ENCODE measurements at regions of chr1 and their contacts with region 1.

Region 1: DNA sequence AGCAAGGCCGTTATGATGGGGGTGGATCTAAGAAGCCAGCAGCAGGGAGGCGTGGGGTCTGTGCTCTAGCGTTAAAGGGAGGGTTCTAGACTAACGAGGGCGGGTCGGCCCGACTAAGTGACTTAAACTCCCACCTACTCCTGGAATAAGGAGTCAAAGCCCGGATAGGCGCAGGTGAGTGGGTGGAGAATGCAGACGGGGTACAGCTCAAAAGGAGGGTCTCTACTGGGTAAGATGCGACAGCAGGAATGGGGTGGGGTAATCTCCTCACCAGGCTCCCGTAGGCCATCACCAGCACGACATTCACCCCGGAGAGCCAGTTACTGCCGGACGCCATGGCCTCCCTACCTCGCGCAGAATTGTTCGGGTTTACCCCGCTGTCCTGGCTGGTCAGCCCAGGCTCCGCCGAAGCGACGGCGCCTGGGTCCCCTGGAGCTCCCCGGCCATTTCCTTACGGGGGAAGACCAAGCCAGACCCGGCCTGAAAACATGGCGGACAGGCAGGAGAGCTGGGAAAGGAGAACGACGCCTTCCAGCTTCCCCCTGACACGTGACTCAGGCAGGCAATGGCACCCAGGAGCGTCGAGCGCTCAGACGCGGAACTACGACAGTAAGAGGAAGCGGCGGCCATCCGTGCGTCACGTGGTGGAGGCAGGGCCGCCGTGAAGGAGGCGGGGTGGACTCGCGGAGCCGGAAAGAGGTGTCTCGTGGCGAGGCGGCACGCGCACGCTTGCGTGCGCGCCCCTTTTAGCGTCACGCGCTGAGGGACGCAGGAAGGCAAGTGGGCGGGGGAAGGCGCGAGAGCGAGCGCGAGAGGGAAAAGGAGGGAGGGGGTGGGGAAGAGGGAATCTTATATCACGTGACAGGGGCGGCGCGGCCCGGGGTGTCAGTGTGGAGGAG is at the start of gene UBAP2L:
- DNase-seq: peak; percentile 100
- H3K4me3 Mint-ChIP-seq: peak within 1 kb of the TSS; percentile 92
- H3K27ac Mint-ChIP-seq: peak within 1 kb of the TSS; percentile 99
- H3K4me1 Mint-ChIP-seq: peaks cover 49% of the 10 kb centered on the region
- H3K27me3 Mint-ChIP-seq: no peaks in the 10 kb centered on the region
- CTCF ChIP-seq: no peak
- total RNA-seq, gene UBAP2L: 219 and 223 TPM in 2 replicates

Region 2: GRCh38 chr1:154154534-154155191 is 65.7 kb before region 1 on chr1 and contains the start of gene NUP210L:
- CTCF ChIA-PET with region 1: no interaction called
- POLR2A ChIA-PET with region 1: no interaction called
- intact Hi-C with region 1: no loop called
- DNase-seq: no peak
- H3K4me3 Mint-ChIP-seq: no peak within 1 kb of the TSS
- H3K27ac Mint-ChIP-seq: no peak within 1 kb of the TSS
- H3K4me1 Mint-ChIP-seq: peaks cover 7% of the 10 kb centered on the region
- H3K27me3 Mint-ChIP-seq: no peaks in the 10 kb centered on the region
- CTCF ChIP-seq: no peak
- total RNA-seq, gene NUP210L: 0.05 and 0.10 TPM in 2 replicates

Region 3: GRCh38 chr1:154183045-154183915 is 37.0 kb before region 1 on chr1:
- CTCF ChIA-PET with region 1: interaction called, 9 read pairs
- POLR2A ChIA-PET with region 1: interaction called, 140 read pairs
- intact Hi-C with region 1: loop called (anchors 1 kb)
- DNase-seq: peak; percentile 99
- H3K4me3 Mint-ChIP-seq: peak overlapping the region; percentile 92
- H3K27ac Mint-ChIP-seq: peak overlapping the region; percentile 96
- H3K4me1 Mint-ChIP-seq: peaks cover 27% of the 10 kb centered on the region
- H3K27me3 Mint-ChIP-seq: no peaks in the 10 kb centered on the region
- CTCF ChIP-seq: no peak

Region 4: GRCh38 chr1:154198756-154199562 is 21.4 kb before region 1 on chr1:
- CTCF ChIA-PET with region 1: interaction called, 29 read pairs
- POLR2A ChIA-PET with region 1: interaction called, 167 read pairs
- intact Hi-C with region 1: loop called (anchors 2 kb)
- DNase-seq: peak; percentile 80
- H3K4me3 Mint-ChIP-seq: no peak overlapping the region
- H3K27ac Mint-ChIP-seq: no peak overlapping the region
- H3K4me1 Mint-ChIP-seq: peaks cover 12% of the 10 kb centered on the region
- H3K27me3 Mint-ChIP-seq: no peaks in the 10 kb centered on the region
- CTCF ChIP-seq: peak; percentile 45

Region 5: DNA sequence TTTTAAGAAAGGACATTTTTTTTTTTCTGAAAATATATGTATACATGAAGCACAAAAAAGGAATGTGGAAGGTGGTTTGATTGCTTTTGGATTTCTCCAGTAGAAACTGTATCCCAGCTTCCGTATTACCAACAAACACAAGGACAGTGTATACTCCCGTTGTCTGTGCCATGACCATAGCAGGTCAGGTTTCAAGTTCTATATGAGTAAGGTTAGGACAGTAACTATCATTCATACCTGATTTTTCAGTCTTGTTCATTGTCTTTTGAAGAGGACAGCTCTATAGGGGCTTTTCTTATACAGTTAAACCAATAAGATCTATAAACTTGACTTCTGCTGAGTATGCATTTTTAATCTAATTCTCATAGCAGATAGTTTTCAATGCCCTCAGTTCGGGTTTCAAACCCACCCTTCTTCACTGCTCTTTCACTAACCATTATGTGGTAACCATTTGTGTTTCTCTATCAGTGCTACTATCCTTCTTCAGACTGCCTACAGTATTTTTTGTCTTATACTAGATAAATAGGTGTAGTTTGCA is 20.0 kb after region 1 on chr1:
- CTCF ChIA-PET with region 1: interaction called, 5 read pairs
- POLR2A ChIA-PET with region 1: interaction called, 15 read pairs
- intact Hi-C with region 1: no loop called
- DNase-seq: no peak
- H3K4me3 Mint-ChIP-seq: no peak overlapping the region
- H3K27ac Mint-ChIP-seq: peak overlapping the region; percentile 79
- H3K4me1 Mint-ChIP-seq: peaks cover 18% of the 10 kb centered on the region
- H3K27me3 Mint-ChIP-seq: no peaks in the 10 kb centered on the region
- CTCF ChIP-seq: no peak

Region 6: GRCh38 chr1:154263465-154264332 is 43.4 kb after region 1 on chr1:
- CTCF ChIA-PET with region 1: no interaction called
- POLR2A ChIA-PET with region 1: interaction called, 25 read pairs
- intact Hi-C with region 1: no loop called
- DNase-seq: no peak
- H3K4me3 Mint-ChIP-seq: no peak overlapping the region
- H3K27ac Mint-ChIP-seq: peak overlapping the region; percentile 63
- H3K4me1 Mint-ChIP-seq: no peaks in the 10 kb centered on the region
- H3K27me3 Mint-ChIP-seq: no peaks in the 10 kb centered on the region
- CTCF ChIP-seq: no peak

Region 7: DNA sequence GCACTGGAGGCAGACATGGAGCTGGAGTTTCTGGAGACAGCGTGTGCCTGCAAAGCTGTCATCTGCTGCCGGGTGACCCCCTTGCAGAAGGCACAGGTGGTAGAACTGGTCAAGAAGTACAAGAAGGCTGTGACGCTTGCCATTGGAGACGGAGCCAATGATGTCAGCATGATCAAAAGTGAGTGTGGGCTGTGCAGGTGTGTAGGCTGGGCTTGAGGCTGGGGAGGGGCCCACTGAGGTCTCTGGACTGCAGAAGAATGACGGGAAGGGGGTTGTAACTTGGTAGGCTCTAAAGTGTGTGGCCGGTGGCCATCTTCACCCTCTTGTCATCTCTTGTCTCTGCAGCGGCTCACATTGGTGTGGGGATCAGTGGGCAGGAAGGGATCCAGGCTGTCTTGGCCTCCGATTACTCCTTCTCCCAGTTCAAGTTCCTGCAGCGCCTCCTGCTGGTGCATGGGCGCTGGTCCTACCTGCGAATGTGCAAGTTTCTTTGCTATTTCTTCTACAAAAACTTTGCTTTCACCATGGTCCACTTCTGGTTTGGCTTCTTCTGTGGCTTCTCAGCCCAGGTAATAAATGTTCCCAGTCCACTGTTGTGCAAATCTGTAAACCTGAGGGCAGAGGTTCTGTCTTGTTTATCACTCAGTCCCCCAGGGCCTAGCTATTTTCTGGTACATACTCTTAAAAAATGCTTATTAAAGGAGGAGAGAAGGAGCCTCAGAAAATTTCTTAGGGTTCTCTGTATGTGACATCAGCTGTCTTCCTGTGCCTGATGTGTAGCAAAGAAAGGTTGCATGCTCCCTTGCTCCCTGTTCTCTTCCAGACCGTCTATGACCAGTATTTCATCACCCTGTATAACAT is 124.9 kb after region 1 on chr1:
- CTCF ChIA-PET with region 1: no interaction called
- POLR2A ChIA-PET with region 1: no interaction called
- intact Hi-C with region 1: no loop called
- DNase-seq: peak; percentile 66
- H3K4me3 Mint-ChIP-seq: no peak overlapping the region
- H3K27ac Mint-ChIP-seq: no peak overlapping the region
- H3K4me1 Mint-ChIP-seq: peaks cover 6% of the 10 kb centered on the region
- H3K27me3 Mint-ChIP-seq: no peaks in the 10 kb centered on the region
- CTCF ChIP-seq: peak; percentile 86

Measured in MCF 10A (cell line).